ENCODE measurements at regions of chr19 and their contacts with region 1.

Region 1: GRCh38 chr19:9934132-9934950 is 2.0 kb downstream of the OLFM2 start:
- DNase-seq: peak; percentile 81 to 94 (median 88)
- H3K4me3 ChIP-seq: no peak overlapping the region
- H3K27ac ChIP-seq: peak overlapping the region in 4 of 5 donors; percentile 42 to 67 (median 50)
- H3K4me1 ChIP-seq: peaks cover 19 to 32% of the 10 kb centered on the region in 2 donors
- H3K27me3 ChIP-seq: no peaks in the 10 kb centered on the region
- CTCF ChIP-seq: peak; percentile 88 to 99 (median 98)
- POLR2A ChIP-seq: peak in 1 of 2 donors; percentile 43

Region 2: GRCh38 chr19:9871626-9872338 is 62.6 kb before region 1 on chr19:
- intact Hi-C with region 1: no loop called
- DNase-seq: no peak
- H3K4me3 ChIP-seq: no peak overlapping the region
- H3K27ac ChIP-seq: no peak overlapping the region
- H3K4me1 ChIP-seq: no peaks in the 10 kb centered on the region
- H3K27me3 ChIP-seq: no peaks in the 10 kb centered on the region
- CTCF ChIP-seq: no peak
- POLR2A ChIP-seq: no peak

Region 3: DNA sequence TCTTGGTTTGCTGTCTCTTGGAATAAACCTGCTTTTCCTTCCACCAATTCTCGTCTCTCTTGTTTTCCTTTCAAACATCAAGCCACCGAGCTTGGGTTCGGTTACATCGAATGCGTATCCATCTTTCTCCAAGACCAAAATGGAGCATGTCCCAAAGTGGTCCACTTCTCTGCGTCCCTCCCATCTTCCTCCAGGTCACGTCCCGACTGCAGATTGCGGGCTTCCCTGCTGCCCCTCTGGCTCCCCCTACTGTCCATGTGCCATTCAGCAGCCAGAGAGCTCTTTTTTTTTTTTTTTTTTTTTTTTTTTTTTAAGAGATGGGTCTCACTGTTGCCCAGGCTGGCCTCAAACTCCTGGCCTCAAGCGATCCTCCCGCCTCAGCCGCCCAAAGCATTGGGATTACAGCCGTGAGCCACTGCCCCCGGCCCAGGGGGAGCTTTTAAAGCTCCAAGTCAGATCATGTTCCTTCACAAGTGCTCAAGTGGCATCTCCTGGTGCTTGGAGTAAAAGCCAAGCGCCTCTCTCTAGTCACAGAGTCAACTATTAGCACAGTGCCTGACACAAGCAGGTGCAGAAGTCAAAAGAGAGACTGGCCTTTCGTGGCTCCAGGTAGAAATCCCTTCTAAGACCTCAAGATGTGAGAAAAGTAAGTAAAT is 66.0 kb after region 1 on chr19:
- intact Hi-C with region 1: loop called (anchors 5 kb)
- DNase-seq: peak; percentile 73 to 86 (median 79)
- H3K4me3 ChIP-seq: no peak overlapping the region
- H3K27ac ChIP-seq: no peak overlapping the region
- H3K4me1 ChIP-seq: no peaks in the 10 kb centered on the region
- H3K27me3 ChIP-seq: no peaks in the 10 kb centered on the region
- CTCF ChIP-seq: peak; percentile 53 to 80 (median 74)
- POLR2A ChIP-seq: no peak

Region 4: DNA sequence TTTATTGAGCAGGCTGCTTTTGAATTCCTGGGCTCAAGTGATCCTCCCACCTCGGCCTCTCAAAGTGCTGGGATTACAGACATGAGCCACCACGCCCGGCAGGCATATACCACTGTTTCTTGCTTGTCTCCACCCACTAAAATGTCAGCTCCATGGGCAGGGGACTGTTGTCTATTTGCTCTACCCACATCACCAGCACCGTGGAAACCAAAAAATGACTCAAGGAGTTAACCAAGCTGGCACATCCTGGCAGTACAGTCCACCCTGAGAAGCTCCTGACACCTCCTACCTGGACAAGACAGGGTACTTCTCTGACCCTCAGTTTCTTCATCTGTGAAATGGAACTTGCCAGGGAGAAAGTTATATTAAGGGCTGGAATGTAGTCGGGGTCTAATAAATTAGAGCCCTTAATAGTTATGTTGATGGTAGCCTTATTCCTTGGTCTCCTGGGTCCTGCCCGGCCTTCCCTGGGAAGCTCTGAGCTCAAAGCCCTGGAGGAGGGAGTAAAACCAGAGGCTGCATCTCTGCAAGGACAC is 92.9 kb after region 1 on chr19:
- intact Hi-C with region 1: loop called (anchors 2 to 5 kb)
- DNase-seq: no peak
- H3K4me3 ChIP-seq: no peak overlapping the region
- H3K27ac ChIP-seq: peak overlapping the region in 1 of 5 donors; percentile 21
- H3K4me1 ChIP-seq: peaks cover 3 to 5% of the 10 kb centered on the region in 2 donors
- H3K27me3 ChIP-seq: peaks cover 4% of the 10 kb centered on the region
- CTCF ChIP-seq: no peak
- POLR2A ChIP-seq: no peak

Region 5: DNA sequence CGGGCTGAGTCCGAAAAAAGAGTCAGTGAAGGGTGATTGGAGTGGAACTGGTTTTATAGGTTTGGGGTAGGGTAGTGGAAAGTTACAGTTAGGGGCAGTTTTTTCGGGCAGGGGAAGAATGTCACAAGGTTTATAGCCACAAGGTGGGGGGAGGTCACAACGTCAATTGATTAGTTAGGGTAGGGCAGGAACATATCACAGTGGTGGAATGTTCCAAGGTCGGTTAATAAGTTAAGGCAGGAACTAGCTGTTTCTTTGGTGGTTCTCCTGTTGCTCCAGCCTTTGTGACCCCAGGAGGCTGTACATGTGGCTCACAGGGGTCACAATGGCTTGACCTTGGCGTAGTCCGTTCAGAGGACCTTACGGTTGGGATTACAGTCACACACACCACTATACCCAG is 99.3 kb after region 1 on chr19:
- intact Hi-C with region 1: loop called (anchors 2 to 5 kb)
- DNase-seq: no peak
- H3K4me3 ChIP-seq: no peak overlapping the region
- H3K27ac ChIP-seq: no peak overlapping the region
- H3K4me1 ChIP-seq: no peaks in the 10 kb centered on the region
- H3K27me3 ChIP-seq: peaks cover 7% of the 10 kb centered on the region
- CTCF ChIP-seq: no peak
- POLR2A ChIP-seq: no peak

Region 6: DNA sequence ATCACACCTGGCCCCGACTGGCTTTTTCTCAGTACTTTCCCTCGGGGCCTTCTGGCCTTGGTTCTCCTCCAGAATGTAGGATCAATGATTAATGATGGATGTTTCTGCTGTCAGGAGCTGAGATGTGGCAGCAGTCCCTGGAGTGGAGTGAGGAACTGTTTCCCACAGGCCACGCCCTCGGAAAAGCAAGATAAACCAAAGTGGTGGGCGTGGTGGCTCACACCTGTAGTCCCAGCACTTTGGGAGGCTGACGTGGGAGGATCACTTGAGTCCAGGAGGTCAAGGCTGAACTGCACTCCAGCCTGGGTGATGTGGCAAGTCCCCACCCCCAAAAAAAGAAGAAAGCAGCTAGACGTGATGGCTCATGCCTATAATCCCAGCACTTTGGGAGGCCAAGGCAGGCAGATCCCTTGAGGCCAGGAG is 144.7 kb after region 1 on chr19:
- intact Hi-C with region 1: no loop called
- DNase-seq: no peak
- H3K4me3 ChIP-seq: no peak overlapping the region
- H3K27ac ChIP-seq: no peak overlapping the region
- H3K4me1 ChIP-seq: no peaks in the 10 kb centered on the region
- H3K27me3 ChIP-seq: no peaks in the 10 kb centered on the region
- CTCF ChIP-seq: no peak
- POLR2A ChIP-seq: no peak

Region 7: DNA sequence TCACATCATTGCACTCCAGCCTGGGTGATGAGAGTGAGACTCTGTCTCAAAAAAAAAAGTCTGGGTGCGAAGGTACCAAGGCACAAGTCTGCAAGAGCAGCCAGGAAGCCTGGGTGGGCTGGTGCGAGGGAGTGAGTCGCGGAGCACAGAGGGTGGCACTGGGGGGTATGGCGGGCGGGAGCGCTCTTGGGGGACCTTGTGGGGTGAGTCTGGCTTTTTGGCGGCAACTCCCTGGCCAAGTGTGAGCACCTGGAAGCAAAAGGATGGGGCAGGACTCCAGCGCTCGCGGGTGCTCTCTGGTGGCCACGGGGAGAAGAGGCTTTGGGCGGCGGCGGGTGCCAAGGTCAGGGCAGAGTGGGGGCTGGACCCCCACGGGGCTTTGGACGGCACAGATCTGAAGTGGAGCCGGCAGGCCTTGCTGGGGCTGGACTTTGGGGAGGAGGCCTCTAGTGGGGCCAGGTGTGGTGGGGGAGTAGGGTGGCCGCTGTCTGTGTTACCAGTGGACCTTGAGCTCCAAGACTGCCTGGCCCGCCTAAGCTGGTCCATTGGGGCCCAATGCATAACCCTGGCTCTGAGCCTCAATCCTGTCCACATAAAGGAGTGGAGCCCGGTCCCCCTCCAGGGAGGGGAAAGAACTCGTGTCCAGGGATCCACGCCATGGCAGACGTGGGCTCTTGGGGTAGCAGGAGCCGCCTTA is 178.7 kb after region 1 on chr19:
- intact Hi-C with region 1: loop called in 1 of 2 experiments (anchors 10 kb)
- DNase-seq: peak in 5 of 7 donors; percentile 49 to 76 (median 60)
- H3K4me3 ChIP-seq: no peak overlapping the region
- H3K27ac ChIP-seq: peak overlapping the region in 1 of 5 donors; percentile 42
- H3K4me1 ChIP-seq: no peaks in the 10 kb centered on the region
- H3K27me3 ChIP-seq: no peaks in the 10 kb centered on the region
- CTCF ChIP-seq: peak; percentile 45 to 68 (median 55)
- POLR2A ChIP-seq: no peak

Region 8: DNA sequence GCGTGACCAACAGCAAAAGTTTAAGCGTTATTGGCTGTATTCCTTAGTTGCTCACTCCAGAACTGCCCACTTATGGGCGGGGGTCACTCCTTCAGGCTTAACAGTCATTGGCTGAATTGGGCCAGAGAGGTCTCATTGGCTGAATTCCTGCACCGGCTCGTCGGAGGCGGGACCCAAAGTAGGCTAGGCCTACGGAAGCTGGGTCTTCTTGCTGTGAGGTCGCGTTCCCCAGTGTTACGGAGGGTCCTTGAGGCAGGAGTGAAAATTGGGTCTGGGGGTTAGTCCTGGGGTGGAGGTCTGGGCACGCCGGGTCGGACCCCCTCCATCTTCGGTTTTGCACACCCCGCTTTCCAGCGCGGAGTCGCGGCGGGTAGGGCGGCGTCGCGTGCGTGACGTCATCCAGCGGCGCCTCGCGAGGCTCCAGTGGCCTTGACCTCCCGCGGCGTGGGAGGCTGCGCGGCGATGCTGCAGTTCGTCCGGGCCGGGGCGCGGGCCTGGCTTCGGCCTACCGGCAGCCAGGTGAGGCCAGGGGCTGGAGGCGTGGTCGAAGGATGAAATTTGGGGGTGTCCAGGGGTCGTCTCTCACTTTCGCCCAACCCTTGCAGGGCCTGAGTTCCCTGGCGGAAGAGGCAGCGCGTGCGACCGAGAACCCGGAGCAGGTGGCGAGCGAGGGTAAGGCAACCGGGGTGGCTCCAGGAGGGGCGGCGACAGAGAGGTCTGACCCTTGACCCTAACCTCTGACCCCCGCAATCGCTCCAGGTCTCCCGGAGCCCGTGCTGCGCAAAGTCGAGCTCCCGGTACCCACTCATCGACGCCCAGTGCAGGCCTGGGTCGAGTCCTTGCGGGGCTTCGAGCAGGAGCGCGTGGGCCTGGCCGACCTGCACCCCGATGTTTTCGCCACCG is 317.7 kb after region 1 on chr19 and contains the start of gene MRPL4:
- intact Hi-C with region 1: loop called in 1 of 2 experiments (anchors 10 kb)
- DNase-seq: peak; percentile 95 to 99 (median 98)
- H3K4me3 ChIP-seq: peak within 1 kb of the TSS; percentile 21 to 89 (median 81)
- H3K27ac ChIP-seq: peak within 1 kb of the TSS in 4 of 5 donors; percentile 57 to 86 (median 73)
- H3K4me1 ChIP-seq: peaks cover 6 to 13% of the 10 kb centered on the region in 2 donors
- H3K27me3 ChIP-seq: no peaks in the 10 kb centered on the region
- CTCF ChIP-seq: peak in 1 of 6 experiments; percentile 29
- POLR2A ChIP-seq: peak; percentile 52 to 56
- total RNA-seq, gene MRPL4: 43.7 to 123 (median 81.7) TPM

Measured in adrenal gland (tissue), 19 donors.